HCT116 (cell line): ENCODE measurements at regions of chr12 and their contacts with region 1.

Region 1: DNA sequence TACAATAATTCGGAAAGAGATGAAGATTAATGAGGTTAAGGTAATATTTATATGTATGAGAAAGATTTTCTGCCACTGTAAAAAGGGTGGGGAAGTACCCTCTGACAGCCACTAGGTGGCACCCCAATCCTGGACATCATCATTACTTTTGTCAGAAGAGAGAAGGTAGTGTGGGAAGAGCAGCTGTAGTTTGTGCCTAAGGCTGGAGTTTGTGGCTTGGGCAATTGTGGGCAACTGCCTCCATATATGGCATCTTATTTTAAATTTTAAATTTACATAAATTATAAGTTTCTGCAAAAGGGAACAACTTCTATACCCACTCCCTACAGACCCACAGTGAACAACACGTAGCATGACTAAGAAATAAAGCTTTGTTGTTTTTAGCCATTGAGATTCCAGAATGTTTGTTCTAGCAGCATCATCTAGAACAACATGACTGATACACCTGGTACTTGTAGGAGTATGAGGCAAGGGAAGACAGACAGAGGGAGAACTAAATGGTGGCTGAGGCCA is 34.4 kb upstream of the SYCP3 start:
- DNase-seq: peak; percentile 44
- ATAC-seq: peak; percentile 85
- H3K4me3 ChIP-seq: no peak overlapping the region
- H3K27ac ChIP-seq: no peak overlapping the region
- H3K4me1 ChIP-seq: no peaks in the 10 kb centered on the region
- H3K27me3 ChIP-seq: no peaks in the 10 kb centered on the region
- CTCF ChIP-seq: peak; percentile 81 to 91 (median 89)
- POLR2A ChIP-seq: no peak
- RAD21 ChIP-seq: peak; percentile 90

Region 2: DNA sequence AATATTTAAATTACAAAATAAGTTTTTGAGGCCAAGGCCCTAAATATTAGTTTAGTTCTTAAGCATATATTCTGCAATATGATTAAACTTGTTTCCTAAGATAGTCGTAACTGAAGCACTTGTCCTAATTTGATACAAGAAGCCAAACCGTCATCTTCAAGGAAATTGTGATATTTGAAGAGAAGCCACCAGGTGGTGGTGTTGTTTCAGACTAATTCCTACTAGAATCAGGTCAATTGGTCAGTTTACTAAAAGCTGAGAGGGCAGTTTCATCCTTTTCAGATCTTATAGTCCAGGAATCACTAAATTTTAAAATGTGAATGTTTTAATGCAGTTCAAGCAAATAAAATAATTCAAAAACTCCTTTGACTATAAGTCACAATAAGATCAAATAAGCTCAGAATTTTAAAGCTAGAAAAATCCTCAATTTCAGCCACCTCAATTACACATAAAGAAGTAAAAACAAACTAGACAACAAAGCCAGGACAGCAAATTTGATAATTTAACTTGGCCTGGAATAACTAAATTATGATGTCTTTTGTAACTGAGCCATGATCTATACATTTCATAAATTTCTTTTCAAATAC is 359.1 kb before region 1 on chr12:
- CTCF ChIA-PET with region 1: interaction called, 6 read pairs
- POLR2A ChIA-PET with region 1: no interaction called
- RAD21 ChIA-PET with region 1: no interaction called
- intact Hi-C with region 1: loop called (anchors 1 kb)
- DNase-seq: peak; percentile 73
- ATAC-seq: peak; percentile 77
- H3K4me3 ChIP-seq: no peak overlapping the region
- H3K27ac ChIP-seq: no peak overlapping the region
- H3K4me1 ChIP-seq: peaks cover 15 to 20% of the 10 kb centered on the region in 2 experiments
- H3K27me3 ChIP-seq: no peaks in the 10 kb centered on the region
- CTCF ChIP-seq: peak; percentile 54 to 80 (median 71)
- POLR2A ChIP-seq: no peak
- RAD21 ChIP-seq: peak; percentile 91

Region 3: DNA sequence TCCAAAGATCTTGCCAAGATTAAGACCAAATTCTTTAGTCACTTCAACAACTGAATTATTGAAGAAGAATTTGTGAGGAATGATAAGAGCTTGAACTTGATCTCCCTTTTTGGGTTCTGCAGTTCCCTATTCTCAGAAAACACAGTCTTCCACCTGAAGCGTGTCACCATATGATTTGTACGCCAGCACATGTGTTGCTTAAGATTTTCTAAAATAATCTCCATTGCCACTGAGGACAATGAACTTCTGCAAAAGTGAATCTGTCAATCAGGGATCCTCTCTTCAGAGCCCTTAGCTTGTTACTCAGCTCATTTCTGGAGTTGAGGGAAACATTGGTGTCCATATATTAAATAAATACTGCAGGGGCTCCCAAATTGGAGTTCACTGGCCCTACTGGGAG is 302.8 kb before region 1 on chr12:
- CTCF ChIA-PET with region 1: no interaction called
- POLR2A ChIA-PET with region 1: no interaction called
- RAD21 ChIA-PET with region 1: no interaction called
- intact Hi-C with region 1: no loop called
- DNase-seq: no peak
- ATAC-seq: no peak
- H3K4me3 ChIP-seq: no peak overlapping the region
- H3K27ac ChIP-seq: no peak overlapping the region
- H3K4me1 ChIP-seq: no peaks in the 10 kb centered on the region
- H3K27me3 ChIP-seq: no peaks in the 10 kb centered on the region
- CTCF ChIP-seq: no peak
- POLR2A ChIP-seq: no peak
- RAD21 ChIP-seq: no peak

Region 4: GRCh38 chr12:101738920-101739665 is 34.6 kb before region 1 on chr12 and contains the start of gene SYCP3:
- CTCF ChIA-PET with region 1: no interaction called
- POLR2A ChIA-PET with region 1: no interaction called
- RAD21 ChIA-PET with region 1: no interaction called
- intact Hi-C with region 1: no loop called
- DNase-seq: no peak
- ATAC-seq: peak; percentile 25; the same call in 1 of the 2 replicates
- H3K4me3 ChIP-seq: no peak within 1 kb of the TSS
- H3K27ac ChIP-seq: no peak within 1 kb of the TSS
- H3K4me1 ChIP-seq: no peaks in the 10 kb centered on the region
- H3K27me3 ChIP-seq: no peaks in the 10 kb centered on the region
- CTCF ChIP-seq: no peak
- POLR2A ChIP-seq: no peak
- RAD21 ChIP-seq: no peak
- total RNA-seq, gene SYCP3: not detected

Region 5: GRCh38 chr12:101830367-101831325 is 56.9 kb after region 1 on chr12 and contains the start of gene GNPTAB:
- CTCF ChIA-PET with region 1: interaction called, 23 read pairs
- POLR2A ChIA-PET with region 1: interaction called, 3 read pairs
- RAD21 ChIA-PET with region 1: interaction called in 1 of 2 experiments, 5 read pairs
- intact Hi-C with region 1: loop called (anchors 2 kb)
- DNase-seq: peak; percentile 82
- ATAC-seq: peak; percentile 95
- H3K4me3 ChIP-seq: peak within 1 kb of the TSS; percentile 73 to 84
- H3K27ac ChIP-seq: peak within 1 kb of the TSS; percentile 74
- H3K4me1 ChIP-seq: peaks cover 5 to 9% of the 10 kb centered on the region in 2 experiments; a peak in 2 of 4 replicates
- H3K27me3 ChIP-seq: no peaks in the 10 kb centered on the region
- CTCF ChIP-seq: peak; percentile 57 to 64 (median 60); a peak in 5 of 6 replicates
- POLR2A ChIP-seq: peak; percentile 51
- RAD21 ChIP-seq: peak; percentile 64
- total RNA-seq, gene GNPTAB: 41.4 TPM

Region 6: DNA sequence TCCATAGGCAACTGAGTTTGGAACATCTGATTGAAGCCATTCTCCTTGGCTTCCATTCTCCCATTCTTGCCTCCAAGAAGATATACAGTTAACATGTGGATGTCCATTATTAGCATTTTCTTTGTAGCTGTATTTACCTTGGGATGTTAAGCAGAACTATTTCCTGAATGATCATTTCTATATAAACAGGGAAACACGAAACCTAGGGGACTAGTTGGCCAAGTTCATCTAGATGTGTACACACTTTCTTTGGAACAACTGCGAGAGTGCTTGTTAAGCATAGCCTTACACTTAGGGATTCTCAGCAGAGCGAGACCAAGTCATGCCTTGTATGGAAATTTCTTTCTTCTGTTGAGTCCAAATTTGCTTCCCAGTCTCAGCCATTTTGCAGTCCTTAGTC is 145.7 kb after region 1 on chr12:
- CTCF ChIA-PET with region 1: no interaction called
- POLR2A ChIA-PET with region 1: no interaction called
- RAD21 ChIA-PET with region 1: no interaction called
- intact Hi-C with region 1: loop called (anchors 1 kb)
- DNase-seq: no peak
- ATAC-seq: no peak
- H3K4me3 ChIP-seq: no peak overlapping the region
- H3K27ac ChIP-seq: no peak overlapping the region
- H3K4me1 ChIP-seq: no peaks in the 10 kb centered on the region
- H3K27me3 ChIP-seq: no peaks in the 10 kb centered on the region
- CTCF ChIP-seq: no peak
- POLR2A ChIP-seq: no peak
- RAD21 ChIP-seq: no peak

Region 7: GRCh38 chr12:102811110-102811737 is 1037.5 kb after region 1 on chr12:
- CTCF ChIA-PET with region 1: interaction called, 3 read pairs
- POLR2A ChIA-PET with region 1: no interaction called
- RAD21 ChIA-PET with region 1: no interaction called
- intact Hi-C with region 1: loop called (anchors 5 kb)
- DNase-seq: peak; percentile 12
- ATAC-seq: peak; percentile 64
- H3K4me3 ChIP-seq: no peak overlapping the region
- H3K27ac ChIP-seq: no peak overlapping the region
- H3K4me1 ChIP-seq: peaks cover 0 to 6% of the 10 kb centered on the region in 2 experiments; a peak in 1 of 4 replicates
- H3K27me3 ChIP-seq: peaks cover 8% of the 10 kb centered on the region; the same call in 1 of the 2 replicates
- CTCF ChIP-seq: peak; percentile 33 to 73 (median 59); a peak in 5 of 6 replicates
- POLR2A ChIP-seq: no peak
- RAD21 ChIP-seq: peak; percentile 66